ENCODE measurements at regions of chr15 and their contacts with region 1.

Region 1: GRCh38 chr15:87792250-87793040 is 464.1 kb downstream of the NTRK3 start:
- DNase-seq: no peak
- ATAC-seq: no peak
- H3K4me3 ChIP-seq: no peak overlapping the region
- H3K27ac ChIP-seq: no peak overlapping the region
- H3K4me1 ChIP-seq: no peaks in the 10 kb centered on the region
- H3K27me3 ChIP-seq: no peaks in the 10 kb centered on the region
- CTCF ChIP-seq: no peak

Region 2: DNA sequence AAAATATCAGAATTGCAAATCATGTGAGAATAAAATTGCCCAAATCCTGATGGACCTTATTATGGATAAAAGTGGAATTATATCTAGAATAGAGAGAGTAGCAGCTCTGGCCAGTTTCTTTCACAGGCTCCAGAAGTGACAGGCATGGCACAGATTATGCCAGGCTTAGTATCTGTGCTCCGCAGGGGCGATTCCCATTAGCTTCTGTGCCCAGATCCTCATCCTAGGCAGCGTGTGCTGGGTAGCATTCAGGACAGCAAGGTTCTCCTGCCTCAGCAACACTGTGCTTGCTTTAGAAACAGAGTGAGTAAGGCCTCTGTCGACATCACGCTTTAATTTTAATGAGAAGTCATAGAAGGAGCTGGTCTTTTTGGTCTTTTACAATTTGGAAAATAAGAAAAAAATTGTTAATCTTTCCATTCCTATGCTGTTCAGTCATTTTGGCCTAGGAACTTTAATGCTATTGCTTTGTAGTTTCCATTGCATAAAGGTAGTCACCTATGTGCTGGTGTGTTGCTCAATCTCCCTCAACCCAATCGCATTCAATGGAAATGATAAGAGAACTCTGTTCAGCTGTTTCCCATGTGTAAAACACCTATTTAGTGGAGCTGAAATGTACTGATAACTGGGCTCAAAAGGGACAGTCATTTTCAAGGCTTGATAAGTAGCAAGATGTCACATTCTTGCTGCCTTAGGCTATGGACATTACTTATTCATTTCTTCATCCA is 942.7 kb before region 1 on chr15:
- CTCF ChIA-PET with region 1: interaction called, 11 read pairs
- POLR2A ChIA-PET with region 1: no interaction called
- in situ Hi-C with region 1: no loop called
- intact Hi-C with region 1: no loop called
- DNase-seq: no peak
- ATAC-seq: no peak
- H3K4me3 ChIP-seq: no peak overlapping the region
- H3K27ac ChIP-seq: no peak overlapping the region
- H3K4me1 ChIP-seq: no peaks in the 10 kb centered on the region
- H3K27me3 ChIP-seq: no peaks in the 10 kb centered on the region
- CTCF ChIP-seq: no peak

Region 3: GRCh38 chr15:87863152-87863551 is 70.7 kb after region 1 on chr15:
- CTCF ChIA-PET with region 1: no interaction called
- POLR2A ChIA-PET with region 1: no interaction called
- in situ Hi-C with region 1: no loop called
- intact Hi-C with region 1: no loop called
- DNase-seq: no peak
- ATAC-seq: no peak
- H3K4me3 ChIP-seq: no peak overlapping the region
- H3K27ac ChIP-seq: no peak overlapping the region
- H3K4me1 ChIP-seq: no peaks in the 10 kb centered on the region
- H3K27me3 ChIP-seq: no peaks in the 10 kb centered on the region
- CTCF ChIP-seq: no peak